Naive thymus-derived CD8-positive, alpha-beta T cell (primary cell): ENCODE measurements at regions of chr10 and their contacts with region 1.

Region 1: GRCh38 chr10:15168781-15169554 is 475 bp upstream of the NMT2 start:
- DNase-seq: peak; percentile 85 to 99 (median 94)
- ATAC-seq: peak; percentile 49 to 69
- H3K4me3 Mint-ChIP-seq: peak overlapping the region; percentile 76 to 97 (median 88)
- H3K27ac Mint-ChIP-seq: peak overlapping the region; percentile 70 to 97 (median 94)
- H3K4me1 Mint-ChIP-seq: peaks cover 31 to 71% (median 61%) of the 10 kb centered on the region in 4 donors
- H3K27me3 Mint-ChIP-seq: no peaks in the 10 kb centered on the region

Region 2: DNA sequence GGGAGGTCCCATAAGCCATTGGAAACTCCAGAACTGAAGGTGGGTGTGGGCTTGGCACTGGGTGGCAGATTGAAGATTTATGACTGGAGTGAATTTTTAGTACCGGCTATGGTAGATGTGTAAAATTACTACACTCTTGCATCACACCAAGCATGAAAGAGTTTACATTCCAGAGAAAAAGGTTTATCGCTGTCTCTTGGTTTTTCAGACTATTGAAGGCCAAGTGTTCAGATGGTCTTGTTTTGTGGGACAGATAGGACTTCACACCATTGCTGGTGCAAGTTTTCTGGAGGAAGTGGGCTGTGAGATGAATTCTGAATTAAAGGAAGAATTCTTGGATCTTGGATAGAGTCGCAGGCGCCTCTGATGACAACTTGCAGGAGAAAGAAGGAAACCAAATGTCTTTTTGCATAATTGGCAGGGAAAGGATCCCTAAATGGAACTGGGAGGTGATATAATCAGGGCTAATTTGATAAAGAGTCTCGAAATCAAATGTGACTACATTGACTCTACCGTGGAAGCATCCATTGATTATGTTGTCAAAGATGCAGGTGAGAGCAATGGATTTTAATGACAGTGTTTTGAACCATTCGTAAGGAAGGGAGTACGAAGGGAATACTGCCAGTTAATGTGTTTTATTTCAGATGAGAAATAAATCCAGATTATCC is 13.7 kb after region 1 on chr10:
- POLR2A ChIA-PET with region 1: interaction called, 181 read pairs
- DNase-seq: no peak
- ATAC-seq: no peak
- H3K4me3 Mint-ChIP-seq: no peak overlapping the region
- H3K27ac Mint-ChIP-seq: peak overlapping the region in 5 of 10 donors; percentile 4 to 76 (median 17)
- H3K4me1 Mint-ChIP-seq: peaks cover 22 to 48% (median 33%) of the 10 kb centered on the region in 4 donors
- H3K27me3 Mint-ChIP-seq: no peaks in the 10 kb centered on the region

Region 3: DNA sequence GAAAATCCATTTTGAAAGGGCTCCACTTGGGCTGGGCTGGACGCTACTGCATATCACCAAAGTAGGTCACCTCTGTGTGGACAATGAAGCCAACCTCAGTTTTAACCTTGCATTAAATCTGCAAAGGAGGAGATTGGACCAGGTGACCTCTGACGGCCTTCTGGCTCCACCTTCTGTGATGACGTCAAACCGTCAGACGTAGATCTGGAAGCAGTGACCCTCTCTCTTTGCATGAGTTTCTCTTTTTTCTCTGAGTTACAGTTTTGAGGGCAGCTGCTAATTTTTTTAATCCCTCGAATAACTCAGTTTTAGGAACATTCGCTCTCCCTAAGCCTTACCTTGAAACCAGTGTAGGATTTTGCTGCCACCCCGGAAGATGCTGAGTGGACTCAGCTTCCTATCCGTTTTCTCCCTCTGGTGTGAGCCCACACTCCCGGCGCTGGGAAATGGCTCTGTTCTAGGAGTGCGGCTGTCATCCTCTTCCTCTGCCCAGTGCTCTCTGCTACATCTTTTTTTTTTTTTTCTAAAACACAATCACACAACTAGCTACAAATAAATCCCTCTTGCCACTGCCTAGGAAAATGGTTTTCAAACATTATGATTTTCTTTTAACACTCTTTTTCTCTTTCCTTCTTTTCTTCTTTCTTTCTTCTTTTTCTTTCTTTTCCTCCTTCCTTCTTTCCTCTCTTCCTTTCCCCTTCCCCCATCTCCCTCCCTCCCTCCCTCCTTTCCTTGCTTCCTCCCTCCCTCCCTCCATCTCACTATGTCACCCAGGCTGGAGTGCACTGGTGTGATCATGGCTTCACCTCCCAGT is 27.3 kb after region 1 on chr10:
- POLR2A ChIA-PET with region 1: interaction called, 181 read pairs
- DNase-seq: no peak
- ATAC-seq: no peak
- H3K4me3 Mint-ChIP-seq: peak overlapping the region in 9 of 10 donors; percentile 12 to 66 (median 41)
- H3K27ac Mint-ChIP-seq: peak overlapping the region; percentile 8 to 98 (median 74)
- H3K4me1 Mint-ChIP-seq: peaks cover 17 to 39% (median 26%) of the 10 kb centered on the region in 4 donors
- H3K27me3 Mint-ChIP-seq: no peaks in the 10 kb centered on the region

Region 4: GRCh38 chr10:15201589-15202308 is 32.8 kb after region 1 on chr10:
- POLR2A ChIA-PET with region 1: interaction called, 27 read pairs
- DNase-seq: no peak
- ATAC-seq: no peak
- H3K4me3 Mint-ChIP-seq: no peak overlapping the region
- H3K27ac Mint-ChIP-seq: peak overlapping the region in 6 of 10 donors; percentile 1 to 75 (median 30)
- H3K4me1 Mint-ChIP-seq: peaks cover 15 to 51% (median 32%) of the 10 kb centered on the region in 4 donors
- H3K27me3 Mint-ChIP-seq: no peaks in the 10 kb centered on the region

Region 5: DNA sequence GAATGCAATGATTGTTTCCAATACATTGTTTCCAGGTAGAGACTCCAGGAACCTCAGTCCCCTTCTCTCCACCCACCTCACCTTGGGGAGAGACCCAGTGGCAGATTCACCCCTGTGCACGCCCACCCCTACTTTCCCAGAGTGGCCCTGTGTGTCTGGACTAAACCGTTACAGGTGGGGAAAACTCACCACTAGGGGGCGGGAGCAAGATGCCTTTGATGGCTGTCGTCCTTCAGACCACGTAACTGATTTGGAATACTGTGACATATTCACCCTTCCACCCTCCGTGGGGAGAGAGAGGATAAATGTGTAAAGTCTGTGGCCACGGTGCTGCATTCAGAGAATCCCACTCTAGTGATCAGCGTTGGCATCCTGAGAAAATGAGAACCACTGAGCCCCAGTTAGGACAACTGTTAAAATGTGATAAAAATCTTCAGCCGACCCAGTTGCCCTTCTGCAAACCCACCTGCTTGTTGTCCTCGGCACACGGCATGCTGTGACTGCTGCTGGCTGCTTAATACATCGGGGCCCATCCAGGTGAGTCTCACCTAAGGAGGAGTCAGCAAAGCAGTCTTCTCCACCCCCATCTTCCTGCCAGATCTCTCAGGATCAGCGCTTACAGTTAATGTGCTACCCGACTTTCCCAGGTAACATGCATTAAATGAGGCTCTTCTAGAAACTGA is 41.0 kb after region 1 on chr10:
- POLR2A ChIA-PET with region 1: interaction called, 49 read pairs
- DNase-seq: peak; percentile 58 to 92 (median 76)
- ATAC-seq: peak; percentile 53 to 74
- H3K4me3 Mint-ChIP-seq: peak overlapping the region; percentile 28 to 75 (median 62)
- H3K27ac Mint-ChIP-seq: peak overlapping the region; percentile 79 to 97 (median 88)
- H3K4me1 Mint-ChIP-seq: peaks cover 16 to 64% (median 56%) of the 10 kb centered on the region in 4 donors
- H3K27me3 Mint-ChIP-seq: no peaks in the 10 kb centered on the region

Region 6: GRCh38 chr10:15223174-15223573 is 54.2 kb after region 1 on chr10:
- POLR2A ChIA-PET with region 1: interaction called, 10 read pairs
- DNase-seq: no peak
- ATAC-seq: no peak
- H3K4me3 Mint-ChIP-seq: no peak overlapping the region
- H3K27ac Mint-ChIP-seq: no peak overlapping the region
- H3K4me1 Mint-ChIP-seq: peaks cover 0 to 6% (median 2%) of the 10 kb centered on the region in 4 donors
- H3K27me3 Mint-ChIP-seq: peaks cover 0 to 2% (median 0%) of the 10 kb centered on the region in 5 donors

Region 7: GRCh38 chr10:15262036-15262713 is 93.2 kb after region 1 on chr10:
- POLR2A ChIA-PET with region 1: no interaction called
- DNase-seq: peak in 1 of 10 donors; percentile 9
- ATAC-seq: peak in 1 of 2 donors; percentile 38
- H3K4me3 Mint-ChIP-seq: no peak overlapping the region
- H3K27ac Mint-ChIP-seq: no peak overlapping the region
- H3K4me1 Mint-ChIP-seq: no peaks in the 10 kb centered on the region
- H3K27me3 Mint-ChIP-seq: no peaks in the 10 kb centered on the region